ENCODE measurements at regions of chr18 and their contacts with region 1.

Region 1: GRCh38 chr18:63422087-63422809 is at the start of gene VPS4B:
- DNase-seq: peak; percentile 91 to 97 (median 92)
- ATAC-seq: peak; percentile 96
- H3K4me3 ChIP-seq: peak within 1 kb of the TSS; percentile 98
- H3K27ac ChIP-seq: peak within 1 kb of the TSS; percentile 92
- H3K4me1 ChIP-seq: peaks cover 0 to 5% of the 10 kb centered on the region in 2 experiments; a peak in 3 of 5 replicates
- H3K27me3 ChIP-seq: no peaks in the 10 kb centered on the region
- CTCF ChIP-seq: 0 out of 6 replicates have a peak, but pooled peaks of 1 of the 3 experiments have one; percentile 16
- EP300 ChIP-seq: no peak
- POLR2A ChIP-seq: peak; percentile 89
- RAD21 ChIP-seq: no peak
- polyA plus RNA-seq, gene VPS4B: 10.4 to 10.8 TPM

Region 2: GRCh38 chr18:63367053-63367953 is 54.9 kb before region 1 on chr18 and contains the start of gene KDSR:
- CTCF ChIA-PET with region 1: no interaction called
- POLR2A ChIA-PET with region 1: interaction called, 3 read pairs
- in situ Hi-C with region 1: loop called (anchors 5 kb)
- intact Hi-C with region 1: loop called (anchors 5 kb)
- DNase-seq: peak; percentile 77 to 92 (median 84)
- ATAC-seq: peak; percentile 96
- H3K4me3 ChIP-seq: peak within 1 kb of the TSS; percentile 79
- H3K27ac ChIP-seq: peak within 1 kb of the TSS; percentile 87
- H3K4me1 ChIP-seq: peaks cover 6 to 12% of the 10 kb centered on the region in 2 experiments; a peak in 3 of 5 replicates
- H3K27me3 ChIP-seq: no peaks in the 10 kb centered on the region
- CTCF ChIP-seq: no peak
- EP300 ChIP-seq: no peak
- POLR2A ChIP-seq: peak; percentile 91
- RAD21 ChIP-seq: no peak
- polyA plus RNA-seq, gene KDSR: 4.0 to 5.3 TPM

Region 3: GRCh38 chr18:63374540-63374939 is 47.7 kb before region 1 on chr18:
- CTCF ChIA-PET with region 1: no interaction called
- POLR2A ChIA-PET with region 1: interaction called, 5 read pairs
- in situ Hi-C with region 1: loop called (anchors 5 kb)
- intact Hi-C with region 1: loop called (anchors 5 kb)
- DNase-seq: no peak
- ATAC-seq: no peak
- H3K4me3 ChIP-seq: no peak overlapping the region
- H3K27ac ChIP-seq: no peak overlapping the region
- H3K4me1 ChIP-seq: no peaks in the 10 kb centered on the region
- H3K27me3 ChIP-seq: no peaks in the 10 kb centered on the region
- CTCF ChIP-seq: no peak
- EP300 ChIP-seq: no peak
- POLR2A ChIP-seq: no peak
- RAD21 ChIP-seq: no peak

Region 4: DNA sequence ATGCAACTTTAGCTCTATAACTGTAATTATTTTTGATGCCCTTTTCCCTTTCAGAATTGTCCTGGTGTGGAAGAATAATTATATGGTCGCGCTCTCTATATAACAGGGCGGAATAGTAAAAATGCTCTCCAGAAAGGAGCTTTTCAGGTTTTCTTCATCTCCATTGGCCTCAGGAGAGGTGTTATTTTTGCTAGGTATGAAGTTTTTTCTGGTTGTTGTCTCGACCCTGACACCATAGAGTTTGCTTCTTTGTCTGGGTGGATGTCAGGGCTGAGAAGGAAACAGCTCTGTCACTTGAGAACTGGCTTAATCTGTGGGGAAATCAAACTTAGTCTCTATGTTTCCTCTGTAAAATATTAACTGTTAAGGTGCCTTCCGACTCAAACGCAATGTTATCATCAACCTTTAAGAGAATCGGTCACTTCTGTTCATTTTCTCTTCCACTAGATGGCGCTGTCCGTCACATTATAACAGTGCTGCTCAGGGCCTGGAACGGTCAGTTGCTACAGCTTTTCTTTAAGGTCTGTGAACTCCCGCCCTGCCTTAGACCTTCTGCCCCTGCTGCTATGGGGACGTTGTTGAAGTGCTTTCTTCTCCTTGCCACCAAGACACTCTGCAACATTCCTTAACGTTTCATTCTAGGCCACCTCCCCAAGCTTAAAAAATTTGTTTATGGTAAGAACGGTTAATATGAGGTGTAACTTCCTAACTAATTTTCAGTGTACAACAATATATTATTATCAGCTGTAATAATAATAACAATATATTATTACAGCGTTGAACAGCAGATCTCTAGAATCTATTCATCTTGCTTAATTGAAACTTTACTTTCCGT is 96.1 kb after region 1 on chr18:
- CTCF ChIA-PET with region 1: no interaction called
- POLR2A ChIA-PET with region 1: no interaction called
- in situ Hi-C with region 1: no loop called
- intact Hi-C with region 1: no loop called
- DNase-seq: peak; percentile 24 to 77 (median 34)
- ATAC-seq: peak; percentile 93
- H3K4me3 ChIP-seq: no peak overlapping the region
- H3K27ac ChIP-seq: no peak overlapping the region
- H3K4me1 ChIP-seq: no peaks in the 10 kb centered on the region
- H3K27me3 ChIP-seq: no peaks in the 10 kb centered on the region
- CTCF ChIP-seq: peak; percentile 55 to 68 (median 60)
- EP300 ChIP-seq: no peak
- POLR2A ChIP-seq: no peak
- RAD21 ChIP-seq: peak; percentile 56 to 78

Measured in K562 (cell line).